ENCODE measurements at regions of chr19 and their contacts with region 1.

Region 1: DNA sequence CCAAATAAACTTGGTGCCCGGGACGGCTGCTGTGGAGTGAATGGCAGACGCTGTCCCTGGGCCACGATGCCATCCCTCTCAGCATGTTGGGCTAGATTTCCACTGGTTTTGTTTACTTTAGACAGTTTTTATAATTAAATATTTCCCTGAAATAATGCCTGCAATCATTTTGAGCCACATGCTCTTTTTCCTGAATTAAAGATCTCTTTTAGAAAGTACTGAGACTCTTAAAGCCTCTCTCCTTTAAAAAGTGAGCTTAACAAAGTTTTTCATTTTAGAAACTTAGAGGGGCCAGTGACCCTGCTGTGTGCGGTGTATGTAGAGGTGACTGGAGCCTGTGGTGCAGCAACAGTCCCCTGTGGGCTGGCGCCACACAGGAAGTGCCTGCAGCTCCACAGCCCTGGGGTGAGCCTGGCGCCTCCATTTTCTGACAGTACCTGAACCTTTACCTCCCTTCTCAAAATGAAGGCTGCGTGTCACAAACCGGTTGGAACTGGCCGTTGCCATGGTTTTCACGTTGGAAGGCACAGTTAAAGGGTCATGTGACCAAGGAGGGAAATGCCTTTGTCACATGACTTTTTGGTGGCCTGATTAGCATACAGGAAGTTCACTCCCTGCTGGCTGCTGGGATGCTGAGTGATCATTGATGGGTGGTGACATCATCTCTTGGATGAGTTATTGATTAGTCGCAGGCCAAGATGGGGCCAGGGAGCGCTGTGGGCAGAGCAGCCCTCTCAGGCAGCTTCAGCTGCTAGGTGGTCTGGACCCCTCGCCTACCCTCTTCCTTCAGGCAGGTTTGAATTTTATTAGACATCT is 26.3 kb downstream of the TSSK6 start:
- DNase-seq: peak; percentile 64 to 95
- H3K4me3 ChIP-seq: peak overlapping the region in 2 of 4 donors; percentile 11 to 14
- H3K27ac ChIP-seq: peak overlapping the region; percentile 53 to 83 (median 74)
- H3K4me1 ChIP-seq: peaks cover 39 to 58% (median 47%) of the 10 kb centered on the region in 4 donors
- H3K27me3 ChIP-seq: no peaks in the 10 kb centered on the region
- CTCF ChIP-seq: no peak
- EP300 ChIP-seq: no peak
- POLR2A ChIP-seq: no peak

Region 2: DNA sequence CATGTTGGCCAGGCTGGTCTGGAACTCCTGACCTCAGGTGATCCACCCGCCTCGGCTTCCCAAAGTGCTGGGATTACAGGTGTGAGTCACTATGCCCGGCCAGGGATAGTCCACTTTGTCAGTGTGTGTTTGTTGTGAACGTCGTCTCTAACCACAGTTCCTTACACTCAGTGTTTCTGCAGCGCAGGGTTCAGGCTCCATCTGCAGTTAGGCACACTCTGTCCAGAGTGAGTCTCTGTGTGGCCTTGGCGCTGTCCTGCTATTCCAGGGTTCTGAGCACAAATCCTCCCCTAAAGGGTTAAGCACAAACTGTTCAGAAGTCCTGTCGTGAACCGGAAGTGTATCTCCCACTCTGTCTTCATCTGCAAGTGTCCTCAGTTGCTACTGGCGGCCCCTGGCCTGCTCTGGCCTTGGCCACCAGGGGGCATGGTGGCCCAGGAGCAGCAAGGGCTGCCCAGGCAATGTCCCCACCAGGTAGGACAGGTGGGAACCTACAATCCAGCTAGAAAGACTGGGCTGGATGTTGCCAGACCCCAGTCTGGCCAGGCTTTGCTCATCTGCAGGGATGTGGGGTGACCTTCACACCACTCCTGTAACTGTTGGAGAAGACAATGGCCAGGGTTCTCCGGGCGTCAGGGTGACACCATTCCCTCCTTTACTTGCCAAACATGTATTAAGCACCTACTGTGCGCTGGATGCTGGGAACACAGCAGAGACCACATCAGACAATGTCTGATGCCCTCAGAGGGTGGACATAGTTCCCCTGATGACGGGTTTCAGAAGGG is 122.3 kb before region 1 on chr19:
- intact Hi-C with region 1: loop called (anchors 5 kb)
- DNase-seq: peak; percentile 86 to 91
- H3K4me3 ChIP-seq: no peak overlapping the region
- H3K27ac ChIP-seq: peak overlapping the region in 4 of 5 donors; percentile 25 to 49 (median 42)
- H3K4me1 ChIP-seq: peaks cover 12 to 33% (median 16%) of the 10 kb centered on the region in 4 donors
- H3K27me3 ChIP-seq: no peaks in the 10 kb centered on the region
- CTCF ChIP-seq: peak in 5 of 7 experiments; percentile 94 to 97 (median 95)
- EP300 ChIP-seq: no peak
- POLR2A ChIP-seq: no peak

Region 3: GRCh38 chr19:19410275-19411192 is 78.5 kb before region 1 on chr19:
- intact Hi-C with region 1: loop called (anchors 10 kb)
- DNase-seq: no peak
- H3K4me3 ChIP-seq: no peak overlapping the region
- H3K27ac ChIP-seq: no peak overlapping the region
- H3K4me1 ChIP-seq: peaks cover 29 to 68% (median 52%) of the 10 kb centered on the region in 4 donors
- H3K27me3 ChIP-seq: no peaks in the 10 kb centered on the region
- CTCF ChIP-seq: no peak
- EP300 ChIP-seq: no peak
- POLR2A ChIP-seq: no peak

Region 4: DNA sequence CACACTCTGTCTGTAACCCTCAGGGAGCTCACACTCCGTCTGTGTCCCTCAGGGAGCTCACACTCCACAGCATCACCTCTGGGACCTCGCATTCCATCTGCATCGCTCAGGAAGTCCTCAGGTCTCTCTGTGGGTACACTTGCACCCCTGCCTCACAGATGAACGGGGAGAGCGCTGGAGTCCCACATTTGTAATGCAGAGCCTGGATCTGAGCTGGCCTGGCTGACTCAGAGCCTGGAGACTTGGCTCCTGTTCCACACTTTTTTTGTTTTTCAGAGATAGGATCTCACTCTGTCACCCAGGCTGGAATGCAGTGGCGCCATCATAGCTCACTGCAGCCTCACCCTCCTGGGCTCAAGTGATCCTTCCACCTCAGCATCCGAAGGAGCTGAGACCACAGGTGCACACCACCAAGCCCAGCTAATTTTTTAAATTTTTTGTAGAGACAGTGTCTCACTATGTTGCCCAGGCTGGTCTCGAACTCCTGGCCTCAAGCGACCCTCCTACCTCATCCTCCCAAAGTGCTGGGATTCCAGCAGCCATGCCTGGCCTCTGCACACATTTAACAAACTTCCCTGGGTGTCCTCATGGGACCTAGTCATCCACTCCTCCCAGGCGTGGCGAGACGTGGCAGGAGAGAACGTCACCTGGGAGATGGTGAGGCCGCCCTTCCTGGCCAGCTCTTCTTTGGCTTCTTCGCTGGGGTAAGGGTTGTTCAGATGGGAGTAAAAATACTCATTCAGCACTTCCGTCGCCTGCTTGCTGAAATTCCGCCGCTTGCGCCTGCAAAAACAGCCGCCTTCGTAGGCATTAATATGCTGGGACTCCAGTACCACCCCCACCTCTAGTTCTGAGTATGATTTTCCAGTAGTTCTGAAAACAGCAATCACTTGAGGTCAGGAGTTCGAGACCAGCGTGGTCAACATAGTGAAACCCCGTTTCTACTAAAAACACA is 80.0 kb after region 1 on chr19:
- intact Hi-C with region 1: no loop called
- DNase-seq: no peak
- H3K4me3 ChIP-seq: no peak overlapping the region
- H3K27ac ChIP-seq: no peak overlapping the region
- H3K4me1 ChIP-seq: no peaks in the 10 kb centered on the region
- H3K27me3 ChIP-seq: no peaks in the 10 kb centered on the region
- CTCF ChIP-seq: no peak
- EP300 ChIP-seq: no peak
- POLR2A ChIP-seq: no peak